CD4-positive, alpha-beta memory T cell (primary cell): ENCODE measurements at regions of chr17 and their contacts with region 1.

Region 1: GRCh38 chr17:16987830-16988601 is 16.1 kb upstream of the TNFRSF13B start:
- DNase-seq: peak in 4 of 5 donors; percentile 33 to 42 (median 36)
- H3K4me3 ChIP-seq: peak overlapping the region; percentile 11 to 20
- H3K4me3 Mint-ChIP-seq: peak overlapping the region; percentile 56 to 85 (median 82)
- H3K27ac ChIP-seq: peak overlapping the region; percentile 36
- H3K27ac Mint-ChIP-seq: peak overlapping the region; percentile 65 to 97 (median 90)
- H3K4me1 ChIP-seq: peaks cover 48% of the 10 kb centered on the region
- H3K4me1 Mint-ChIP-seq: peaks cover 29 to 43% (median 33%) of the 10 kb centered on the region in 4 donors
- H3K27me3 ChIP-seq: no peaks in the 10 kb centered on the region
- H3K27me3 Mint-ChIP-seq: no peaks in the 10 kb centered on the region

Region 2: GRCh38 chr17:16820161-16820877 is 167.7 kb before region 1 on chr17:
- CTCF ChIA-PET with region 1: no interaction called
- POLR2A ChIA-PET with region 1: no interaction called
- intact Hi-C with region 1: no loop called
- DNase-seq: no peak
- H3K4me3 ChIP-seq: no peak overlapping the region
- H3K4me3 Mint-ChIP-seq: no peak overlapping the region
- H3K27ac ChIP-seq: no peak overlapping the region
- H3K27ac Mint-ChIP-seq: no peak overlapping the region
- H3K4me1 ChIP-seq: no peaks in the 10 kb centered on the region
- H3K4me1 Mint-ChIP-seq: no peaks in the 10 kb centered on the region
- H3K27me3 ChIP-seq: no peaks in the 10 kb centered on the region
- H3K27me3 Mint-ChIP-seq: peaks cover 11 to 28% of the 10 kb centered on the region in 2 donors

Region 3: GRCh38 chr17:16915752-16916556 is 72.1 kb before region 1 on chr17:
- CTCF ChIA-PET with region 1: interaction called, 10 read pairs
- POLR2A ChIA-PET with region 1: no interaction called
- intact Hi-C with region 1: no loop called
- DNase-seq: peak in 2 of 5 donors; percentile 6 to 14
- H3K4me3 ChIP-seq: no peak overlapping the region
- H3K4me3 Mint-ChIP-seq: no peak overlapping the region
- H3K27ac ChIP-seq: no peak overlapping the region
- H3K27ac Mint-ChIP-seq: no peak overlapping the region
- H3K4me1 ChIP-seq: peaks cover 13% of the 10 kb centered on the region
- H3K4me1 Mint-ChIP-seq: peaks cover 0 to 7% (median 4%) of the 10 kb centered on the region in 4 donors
- H3K27me3 ChIP-seq: peaks cover 4% of the 10 kb centered on the region
- H3K27me3 Mint-ChIP-seq: peaks cover 2 to 16% of the 10 kb centered on the region in 2 donors

Region 4: GRCh38 chr17:16922386-16923104 is 65.5 kb before region 1 on chr17:
- CTCF ChIA-PET with region 1: interaction called, 4 read pairs
- POLR2A ChIA-PET with region 1: interaction called, 3 read pairs
- intact Hi-C with region 1: loop called (anchors 1 kb)
- DNase-seq: peak in 4 of 5 donors; percentile 6 to 16 (median 10)
- H3K4me3 ChIP-seq: no peak overlapping the region
- H3K4me3 Mint-ChIP-seq: no peak overlapping the region
- H3K27ac ChIP-seq: no peak overlapping the region
- H3K27ac Mint-ChIP-seq: peak overlapping the region in 1 of 7 donors; percentile 27
- H3K4me1 ChIP-seq: no peaks in the 10 kb centered on the region
- H3K4me1 Mint-ChIP-seq: no peaks in the 10 kb centered on the region
- H3K27me3 ChIP-seq: no peaks in the 10 kb centered on the region
- H3K27me3 Mint-ChIP-seq: peaks cover 0 to 5% of the 10 kb centered on the region in 2 donors

Region 5: DNA sequence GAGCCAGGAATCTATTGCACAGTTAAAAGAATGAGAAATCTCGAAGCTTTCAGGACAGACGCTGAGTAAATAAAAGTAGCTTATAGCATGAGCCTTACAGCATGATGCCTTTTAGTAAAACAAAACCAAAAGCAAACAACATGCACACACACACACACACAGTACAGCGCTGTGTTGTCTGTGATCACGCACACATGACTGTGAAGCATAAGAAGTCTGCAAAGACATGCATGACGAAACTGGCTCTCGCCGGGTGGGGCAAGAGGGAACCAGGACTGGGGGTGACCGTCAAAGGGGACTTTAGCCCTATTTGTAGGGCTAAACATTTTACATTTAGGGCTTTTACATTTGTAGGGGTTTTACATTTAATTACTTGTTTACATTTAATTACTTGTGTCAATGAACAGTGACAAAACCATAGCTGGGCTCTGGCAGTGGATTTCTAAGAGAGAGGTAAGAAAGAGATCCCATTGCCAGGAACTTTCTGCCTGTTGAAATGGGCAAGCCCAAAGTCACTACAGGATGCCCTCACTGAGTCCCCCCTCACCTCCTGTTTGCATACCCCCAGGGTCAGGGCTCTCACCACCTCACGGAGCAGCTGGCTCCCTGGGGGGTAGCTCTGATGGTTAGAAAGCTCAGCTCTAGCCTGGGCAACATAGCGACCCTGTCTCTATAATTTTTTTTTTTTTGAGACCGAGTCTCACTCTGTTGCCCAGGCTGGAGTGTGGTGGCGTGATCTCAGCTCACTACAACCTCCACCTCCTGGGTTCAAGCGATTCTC is 14.1 kb before region 1 on chr17:
- CTCF ChIA-PET with region 1: interaction called, 27 read pairs
- POLR2A ChIA-PET with region 1: interaction called, 4 read pairs
- intact Hi-C with region 1: no loop called
- DNase-seq: no peak
- H3K4me3 ChIP-seq: no peak overlapping the region
- H3K4me3 Mint-ChIP-seq: no peak overlapping the region
- H3K27ac ChIP-seq: no peak overlapping the region
- H3K27ac Mint-ChIP-seq: no peak overlapping the region
- H3K4me1 ChIP-seq: peaks cover 5% of the 10 kb centered on the region
- H3K4me1 Mint-ChIP-seq: peaks cover 2 to 10% (median 4%) of the 10 kb centered on the region in 4 donors
- H3K27me3 ChIP-seq: no peaks in the 10 kb centered on the region
- H3K27me3 Mint-ChIP-seq: no peaks in the 10 kb centered on the region

Region 6: DNA sequence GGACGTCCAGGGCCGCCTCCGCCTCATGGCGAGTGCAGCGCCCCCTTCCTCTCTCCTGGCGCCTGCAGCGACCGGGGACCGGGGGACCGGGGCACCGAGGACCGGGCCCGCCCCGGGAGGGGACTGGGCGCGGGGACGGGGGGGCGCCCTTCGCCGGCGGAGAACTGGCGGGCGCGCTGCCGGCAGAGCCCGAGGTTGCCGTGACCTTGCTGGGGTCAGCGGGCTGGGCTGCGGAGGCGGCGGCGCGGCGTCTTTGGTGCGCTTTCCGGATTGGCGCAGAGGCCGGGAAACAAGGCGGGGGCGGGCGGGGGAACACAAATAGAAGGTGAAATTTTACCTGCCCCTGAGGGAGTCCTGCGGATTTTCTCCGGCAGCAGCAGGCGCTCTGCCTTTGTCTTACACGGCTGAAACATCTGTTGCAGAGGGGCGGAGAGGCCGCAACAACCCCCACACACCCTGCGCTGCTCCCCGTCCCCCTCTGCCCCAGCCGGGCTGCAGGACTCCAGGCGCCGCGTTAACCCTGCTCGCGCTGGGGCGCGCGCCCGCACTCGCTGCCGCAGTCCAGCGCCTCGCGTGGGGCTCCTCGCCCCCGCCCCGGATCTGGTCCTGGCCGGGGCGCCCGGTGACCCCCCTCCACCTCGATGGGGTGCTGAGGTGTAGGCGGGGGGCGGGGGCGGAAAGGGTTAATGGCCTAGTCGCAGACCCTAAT is 795.3 kb after region 1 on chr17:
- CTCF ChIA-PET with region 1: no interaction called
- POLR2A ChIA-PET with region 1: no interaction called
- intact Hi-C with region 1: no loop called
- DNase-seq: peak; percentile 55 to 71 (median 61)
- H3K4me3 ChIP-seq: peak overlapping the region; percentile 29 to 56
- H3K4me3 Mint-ChIP-seq: peak overlapping the region; percentile 86 to 92 (median 88)
- H3K27ac ChIP-seq: no peak overlapping the region
- H3K27ac Mint-ChIP-seq: peak overlapping the region in 3 of 7 donors; percentile 20 to 42 (median 35)
- H3K4me1 ChIP-seq: peaks cover 18% of the 10 kb centered on the region
- H3K4me1 Mint-ChIP-seq: peaks cover 5 to 23% (median 16%) of the 10 kb centered on the region in 4 donors
- H3K27me3 ChIP-seq: no peaks in the 10 kb centered on the region
- H3K27me3 Mint-ChIP-seq: no peaks in the 10 kb centered on the region